IMR-90 (cell line): ENCODE measurements at regions of chr7 and their contacts with region 1.

Region 1: GRCh38 chr7:151936207-151936606 is 20.0 kb upstream of the GALNTL5 start:
- DNase-seq: no peak
- ATAC-seq: no peak
- H3K4me3 ChIP-seq: no peak overlapping the region
- H3K27ac ChIP-seq: no peak overlapping the region
- H3K4me1 ChIP-seq: no peaks in the 10 kb centered on the region
- H3K27me3 ChIP-seq: peaks cover 2% of the 10 kb centered on the region
- CTCF ChIP-seq: no peak
- POLR2A ChIP-seq: no peak
- RAD21 ChIP-seq: no peak

Region 2: GRCh38 chr7:151782598-151783448 is 153.4 kb before region 1 on chr7:
- CTCF ChIA-PET with region 1: interaction called, 3 read pairs
- POLR2A ChIA-PET with region 1: no interaction called
- dilution Hi-C with region 1: no loop called
- in situ Hi-C with region 1: no loop called
- intact Hi-C with region 1: loop called (anchors 1 kb)
- DNase-seq: peak; percentile 34
- ATAC-seq: peak; percentile 96
- H3K4me3 ChIP-seq: peak overlapping the region; percentile 17; the same call in 1 of the 2 replicates
- H3K27ac ChIP-seq: no peak overlapping the region
- H3K4me1 ChIP-seq: no peaks in the 10 kb centered on the region
- H3K27me3 ChIP-seq: peaks cover 40% of the 10 kb centered on the region
- CTCF ChIP-seq: peak; percentile 91
- POLR2A ChIP-seq: no peak
- RAD21 ChIP-seq: peak; percentile 65